K562 (cell line): ENCODE measurements at regions of chr10 and their contacts with region 1.

Region 1: GRCh38 chr10:122648599-122649428 is 50.8 kb downstream of the C10orf120 start:
- DNase-seq: peak; percentile 35 to 57 (median 39)
- ATAC-seq: peak; percentile 82
- H3K4me3 ChIP-seq: no peak overlapping the region
- H3K27ac ChIP-seq: no peak overlapping the region
- H3K4me1 ChIP-seq: no peaks in the 10 kb centered on the region; a peak in 2 of 5 replicates
- H3K27me3 ChIP-seq: no peaks in the 10 kb centered on the region; a peak in 1 of 5 replicates
- CTCF ChIP-seq: peak; percentile 63 to 73 (median 67); a peak in 5 of 6 replicates
- EP300 ChIP-seq: no peak
- POLR2A ChIP-seq: no peak
- RAD21 ChIP-seq: peak in 1 of 2 experiments; percentile 58; a peak in 3 of 4 replicates

Region 2: DNA sequence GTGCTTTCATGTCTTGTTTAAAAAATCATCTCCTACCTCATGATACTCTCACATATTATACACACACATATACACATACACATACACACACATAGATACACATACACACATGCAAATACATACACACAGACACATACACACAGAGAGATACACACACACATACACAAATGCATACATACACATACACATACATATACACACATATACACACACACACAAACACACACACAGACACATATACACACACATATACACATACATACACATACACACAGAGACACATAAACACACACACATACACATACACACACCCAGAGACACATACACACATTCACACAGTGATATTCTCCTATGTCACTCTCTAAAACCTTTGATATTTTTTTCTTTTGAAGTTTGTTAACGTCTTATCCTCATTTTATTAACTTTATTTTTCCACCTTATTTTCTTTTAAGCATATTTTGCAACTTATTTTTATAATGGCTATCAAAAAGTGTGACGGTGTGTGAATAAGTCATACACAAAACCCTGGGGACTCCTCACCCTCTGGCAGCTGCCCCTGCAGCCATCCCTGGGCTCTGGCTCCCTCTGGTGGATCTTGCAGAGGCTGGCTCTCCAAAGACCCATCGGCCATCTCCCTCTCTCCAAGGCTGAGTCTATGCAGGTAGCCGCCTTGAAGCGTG is 54.8 kb after region 1 on chr10:
- CTCF ChIA-PET with region 1: no interaction called
- POLR2A ChIA-PET with region 1: no interaction called
- in situ Hi-C with region 1: no loop called
- intact Hi-C with region 1: loop called (anchors 1 kb)
- DNase-seq: peak; percentile 63 to 71 (median 68)
- ATAC-seq: peak; percentile 96
- H3K4me3 ChIP-seq: no peak overlapping the region
- H3K27ac ChIP-seq: no peak overlapping the region
- H3K4me1 ChIP-seq: no peaks in the 10 kb centered on the region
- H3K27me3 ChIP-seq: peaks cover 0 to 3% of the 10 kb centered on the region in 2 experiments; a peak in 1 of 5 replicates
- CTCF ChIP-seq: peak; percentile 70 to 76 (median 74)
- EP300 ChIP-seq: no peak
- POLR2A ChIP-seq: no peak
- RAD21 ChIP-seq: peak; percentile 56 to 82

Region 3: GRCh38 chr10:122754491-122755235 is 105.8 kb after region 1 on chr10:
- CTCF ChIA-PET with region 1: no interaction called
- POLR2A ChIA-PET with region 1: no interaction called
- in situ Hi-C with region 1: no loop called
- intact Hi-C with region 1: no loop called
- DNase-seq: no peak
- ATAC-seq: no peak
- H3K4me3 ChIP-seq: no peak overlapping the region
- H3K27ac ChIP-seq: no peak overlapping the region
- H3K4me1 ChIP-seq: no peaks in the 10 kb centered on the region
- H3K27me3 ChIP-seq: no peaks in the 10 kb centered on the region
- CTCF ChIP-seq: no peak
- EP300 ChIP-seq: no peak
- POLR2A ChIP-seq: no peak
- RAD21 ChIP-seq: no peak